Activated T-helper 1 cell treated with anti-CD3 and anti-CD28 coated beads, Interleukin-12 subunit alpha, Interleukin-12 subunit beta, Interleukin-2, Interleukin-4 antibody, amounts not matched to agents 30 ng/mL and 10 ng/mL and 1 ng/mL, durations not matched to agents 14 hours and 24 hours and 36 hours (primary cell): ENCODE measurements at regions of chr1 and their contacts with region 1.

Region 1: DNA sequence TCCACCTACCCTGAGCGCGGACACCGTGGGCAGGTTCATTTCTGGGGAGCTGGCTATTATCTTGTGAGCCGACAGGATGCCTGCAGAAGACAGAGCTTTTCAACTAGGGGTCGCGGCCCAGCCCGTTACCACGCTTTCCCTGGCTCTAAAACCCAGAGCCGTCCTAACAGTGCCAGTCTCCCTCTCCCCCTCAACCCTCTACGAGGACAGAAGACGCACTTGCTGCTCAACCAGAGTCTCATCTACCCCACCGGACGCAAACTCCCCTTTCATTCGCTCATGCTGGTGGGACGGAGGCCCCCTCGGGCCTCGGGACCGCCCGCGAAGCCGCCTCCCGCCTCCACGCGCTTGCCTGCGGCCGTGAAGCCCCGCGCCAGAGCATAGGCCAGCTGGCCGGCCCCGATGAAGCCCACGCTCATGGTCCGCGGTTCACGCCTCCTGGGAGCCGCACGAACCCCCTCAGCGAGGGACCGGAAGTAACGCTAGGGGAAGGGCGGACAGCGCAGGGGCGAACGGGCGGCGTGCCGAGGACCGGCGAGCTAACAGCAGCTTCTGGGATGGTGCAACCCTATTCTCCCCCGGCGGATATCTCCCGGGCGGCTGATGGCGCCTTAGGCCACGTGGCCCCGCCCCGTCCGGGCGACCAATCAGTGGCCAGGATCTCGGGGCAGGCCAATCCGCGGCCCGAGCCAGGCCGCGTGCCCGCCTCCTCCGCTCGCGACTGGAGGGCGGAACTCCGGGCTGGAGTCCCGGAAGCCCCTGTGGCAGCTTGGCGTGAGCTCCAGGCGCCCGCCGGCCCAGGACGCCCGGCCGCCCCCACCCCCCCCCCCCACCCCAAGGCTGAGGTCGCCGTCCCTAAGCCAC is at the start of gene PYCR2:
- DNase-seq: peak; percentile 95
- H3K4me3 Mint-ChIP-seq: peak within 1 kb of the TSS; percentile 94
- H3K27ac Mint-ChIP-seq: peak within 1 kb of the TSS; percentile 91
- H3K4me1 Mint-ChIP-seq: peaks cover 43% of the 10 kb centered on the region
- H3K27me3 Mint-ChIP-seq: no peaks in the 10 kb centered on the region
- total RNA-seq, gene PYCR2: 137 and 145 TPM in 2 replicates

Region 2: GRCh38 chr1:225467193-225468020 is 456.5 kb before region 1 on chr1:
- intact Hi-C with region 1: loop called (anchors 1 kb)
- DNase-seq: peak; percentile 80
- H3K4me3 Mint-ChIP-seq: peak overlapping the region; percentile 92
- H3K27ac Mint-ChIP-seq: peak overlapping the region; percentile 95
- H3K4me1 Mint-ChIP-seq: peaks cover 45% of the 10 kb centered on the region
- H3K27me3 Mint-ChIP-seq: no peaks in the 10 kb centered on the region

Region 3: DNA sequence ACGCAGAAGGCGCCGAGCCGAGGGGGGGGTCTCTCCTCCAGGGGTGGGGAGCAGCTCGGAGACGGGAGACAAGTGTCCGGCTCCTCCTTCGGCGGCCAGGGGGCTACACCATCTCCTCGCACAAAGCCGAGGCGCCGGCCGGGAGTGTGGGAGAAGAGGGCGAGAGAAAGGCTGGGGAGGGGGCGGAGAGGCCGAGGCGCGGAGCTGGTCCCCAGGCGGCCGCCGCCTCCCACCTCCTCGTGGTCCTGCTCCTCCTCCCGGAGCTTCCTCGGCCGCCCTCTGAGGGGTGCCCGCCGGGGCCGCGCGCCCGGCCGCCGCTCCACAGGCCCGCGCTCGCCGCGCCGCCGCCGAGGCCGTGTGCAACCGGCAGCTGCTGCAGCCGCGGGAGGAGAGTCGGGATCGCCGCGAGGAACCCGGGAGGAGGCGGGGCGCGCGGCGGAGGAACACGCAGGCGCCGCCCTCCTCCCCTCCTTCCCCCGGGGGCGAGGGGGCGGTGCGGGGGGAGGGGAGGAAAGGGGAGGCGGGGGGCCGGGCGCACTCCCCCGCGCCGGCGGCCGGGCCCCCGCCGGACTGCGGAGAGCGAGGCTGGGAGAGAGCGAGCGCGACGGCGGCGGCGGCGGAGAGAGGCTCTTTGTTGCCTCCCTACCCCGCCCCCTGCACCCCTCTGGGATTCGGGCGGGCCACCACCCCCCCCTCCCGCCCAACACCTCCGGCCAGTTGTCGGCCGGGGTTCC is 271.0 kb before region 1 on chr1 and contains the start of gene ENAH:
- intact Hi-C with region 1: loop called (anchors 10 kb)
- DNase-seq: peak; percentile 12
- H3K4me3 Mint-ChIP-seq: peak within 1 kb of the TSS; percentile 87
- H3K27ac Mint-ChIP-seq: peak within 1 kb of the TSS; percentile 64
- H3K4me1 Mint-ChIP-seq: peaks cover 16% of the 10 kb centered on the region
- H3K27me3 Mint-ChIP-seq: peaks cover 67% of the 10 kb centered on the region
- total RNA-seq, gene ENAH: 0.05 and 0.23 TPM in 2 replicates

Region 4: GRCh38 chr1:225896937-225897549 is 26.9 kb before region 1 on chr1:
- intact Hi-C with region 1: loop called (anchors 1 kb)
- DNase-seq: peak; percentile 81
- H3K4me3 Mint-ChIP-seq: peak overlapping the region; percentile 44
- H3K27ac Mint-ChIP-seq: peak overlapping the region; percentile 64
- H3K4me1 Mint-ChIP-seq: peaks cover 47% of the 10 kb centered on the region
- H3K27me3 Mint-ChIP-seq: peaks cover 42% of the 10 kb centered on the region

Region 5: GRCh38 chr1:225999227-225999911 is 75.4 kb after region 1 on chr1 and contains the start of gene SDE2:
- intact Hi-C with region 1: loop called (anchors 1 kb)
- DNase-seq: peak; percentile 99
- H3K4me3 Mint-ChIP-seq: peak within 1 kb of the TSS; percentile 100
- H3K27ac Mint-ChIP-seq: peak within 1 kb of the TSS; percentile 100
- H3K4me1 Mint-ChIP-seq: peaks cover 76% of the 10 kb centered on the region
- H3K27me3 Mint-ChIP-seq: no peaks in the 10 kb centered on the region
- total RNA-seq, gene SDE2: 28.2 and 28.4 TPM in 2 replicates